ENCODE measurements at regions of chr17 and their contacts with region 1.

Region 1: DNA sequence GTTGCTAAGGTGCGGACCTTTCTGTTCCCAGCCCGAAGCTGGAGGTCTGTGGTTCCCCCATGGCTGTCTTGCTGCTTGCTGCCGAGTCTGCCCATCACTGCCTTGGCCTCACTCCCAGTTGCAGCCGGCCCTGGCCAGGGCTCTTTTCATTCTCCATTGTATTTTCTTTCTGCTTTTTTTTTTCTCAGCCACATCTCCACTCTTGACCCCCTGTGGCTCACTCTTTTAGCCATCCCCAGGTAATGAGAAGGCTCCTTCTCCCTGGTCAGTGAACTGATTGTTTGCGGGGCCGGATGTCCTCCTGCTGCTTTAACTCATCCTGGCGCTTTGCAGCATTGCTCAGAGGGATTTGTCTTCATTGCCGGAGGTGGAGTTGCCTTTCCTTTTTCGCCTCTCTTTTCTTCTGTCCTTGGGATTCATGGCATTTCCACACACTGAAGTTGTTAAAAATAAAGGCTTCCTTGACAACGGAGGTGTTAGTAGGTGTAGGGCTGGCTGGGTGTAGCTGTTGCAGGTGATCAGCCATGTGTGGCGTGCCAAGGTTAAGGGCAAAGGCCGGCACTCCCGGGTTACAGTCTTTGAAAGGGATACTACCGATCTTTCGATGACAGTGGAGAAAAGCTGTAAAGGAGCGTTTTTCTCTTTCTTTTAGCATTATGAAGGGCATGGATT is 34.1 kb downstream of the MAP2K6 start:
- DNase-seq: peak in 1 of 2 donors; percentile 62
- ATAC-seq: peak; percentile 27 to 50
- H3K4me3 ChIP-seq: peak overlapping the region; percentile 19 to 44 (median 38)
- H3K27ac ChIP-seq: peak overlapping the region; percentile 72 to 84 (median 79)
- H3K4me1 ChIP-seq: peaks cover 52 to 58% of the 10 kb centered on the region in 2 donors
- H3K27me3 ChIP-seq: no peaks in the 10 kb centered on the region
- CTCF ChIP-seq: no peak
- POLR2A ChIP-seq: peak in 1 of 2 donors; percentile 11

Region 2: DNA sequence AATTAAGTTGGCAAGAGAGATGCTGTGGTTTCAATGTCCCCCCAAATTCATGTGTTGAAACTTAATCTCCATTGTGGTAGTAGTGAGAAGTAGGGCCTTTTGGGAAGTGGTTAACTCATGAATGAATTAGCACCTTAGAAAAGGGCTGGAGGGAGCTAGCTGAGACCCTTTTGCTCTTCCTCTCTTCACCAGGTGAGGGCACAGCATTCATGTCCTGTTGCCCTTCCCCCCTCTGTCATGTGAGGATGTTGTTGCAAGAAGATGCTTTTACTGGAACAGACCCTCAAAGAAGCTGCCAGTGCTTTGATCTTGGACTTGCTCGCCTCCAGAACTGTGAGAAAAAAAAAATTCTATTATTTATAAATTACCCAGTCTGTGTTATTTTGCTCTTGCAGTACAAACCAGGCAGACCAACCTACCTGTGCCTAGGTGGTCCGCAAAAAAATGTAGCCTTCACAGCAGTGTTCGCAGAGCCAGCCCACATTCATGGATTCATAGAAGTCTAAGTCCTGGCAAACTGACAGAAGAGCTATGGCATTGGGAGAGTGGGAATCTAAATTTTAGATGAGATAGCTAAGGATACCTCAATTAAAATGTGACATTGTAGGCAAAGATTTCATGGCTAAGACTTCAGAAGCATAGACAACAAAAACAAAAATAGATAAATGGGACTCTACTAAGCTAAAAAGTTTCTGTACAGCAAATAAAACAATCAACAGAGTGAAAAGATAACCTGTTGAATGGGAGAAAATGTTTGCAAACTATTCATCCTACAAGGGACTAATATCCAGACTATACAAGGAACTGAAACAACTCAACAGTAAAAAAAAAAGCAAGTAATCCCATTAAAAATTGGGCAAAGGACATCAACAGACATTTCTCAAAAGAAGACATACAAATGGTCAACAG is 89.6 kb before region 1 on chr17:
- in situ Hi-C with region 1: no loop called
- intact Hi-C with region 1: no loop called
- DNase-seq: no peak
- ATAC-seq: no peak
- H3K4me3 ChIP-seq: no peak overlapping the region
- H3K27ac ChIP-seq: no peak overlapping the region
- H3K4me1 ChIP-seq: peaks cover 10 to 12% of the 10 kb centered on the region in 2 donors
- H3K27me3 ChIP-seq: no peaks in the 10 kb centered on the region
- CTCF ChIP-seq: no peak
- POLR2A ChIP-seq: no peak

Region 3: DNA sequence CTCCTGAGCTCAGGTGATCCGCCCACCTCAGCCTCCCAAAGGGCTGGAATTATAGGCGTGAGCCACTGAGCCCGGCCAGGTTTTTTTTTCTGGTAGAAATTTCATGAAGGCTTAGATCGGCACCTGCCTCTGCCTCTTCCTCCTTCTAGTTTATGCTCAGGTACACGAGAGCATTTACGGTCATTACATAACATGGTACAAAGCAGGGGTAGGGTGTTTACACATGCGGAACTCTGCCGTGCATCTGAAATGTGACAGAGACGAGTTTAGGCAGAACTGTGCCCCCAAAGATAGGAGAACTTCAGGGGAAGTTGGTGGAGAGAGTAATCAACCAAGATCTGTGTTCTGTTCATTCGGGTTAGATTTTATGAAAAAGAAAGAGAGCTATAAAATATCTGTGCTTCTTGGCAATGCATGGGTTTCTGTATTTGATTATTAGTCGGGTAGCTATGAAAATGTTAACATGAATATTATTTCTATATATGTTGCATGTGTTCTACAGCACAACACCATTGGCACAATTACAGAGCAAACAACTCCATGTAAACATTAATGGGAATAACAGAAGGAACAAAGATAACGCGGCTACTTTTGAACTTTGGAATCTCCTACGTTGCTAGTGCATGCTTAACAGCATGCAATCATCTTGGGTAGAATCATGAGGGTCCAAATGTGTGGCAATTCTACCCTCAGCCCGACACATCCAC is 57.6 kb before region 1 on chr17:
- in situ Hi-C with region 1: no loop called
- intact Hi-C with region 1: no loop called
- DNase-seq: no peak
- ATAC-seq: no peak
- H3K4me3 ChIP-seq: no peak overlapping the region
- H3K27ac ChIP-seq: no peak overlapping the region
- H3K4me1 ChIP-seq: no peaks in the 10 kb centered on the region
- H3K27me3 ChIP-seq: no peaks in the 10 kb centered on the region
- CTCF ChIP-seq: no peak
- POLR2A ChIP-seq: no peak

Region 4: DNA sequence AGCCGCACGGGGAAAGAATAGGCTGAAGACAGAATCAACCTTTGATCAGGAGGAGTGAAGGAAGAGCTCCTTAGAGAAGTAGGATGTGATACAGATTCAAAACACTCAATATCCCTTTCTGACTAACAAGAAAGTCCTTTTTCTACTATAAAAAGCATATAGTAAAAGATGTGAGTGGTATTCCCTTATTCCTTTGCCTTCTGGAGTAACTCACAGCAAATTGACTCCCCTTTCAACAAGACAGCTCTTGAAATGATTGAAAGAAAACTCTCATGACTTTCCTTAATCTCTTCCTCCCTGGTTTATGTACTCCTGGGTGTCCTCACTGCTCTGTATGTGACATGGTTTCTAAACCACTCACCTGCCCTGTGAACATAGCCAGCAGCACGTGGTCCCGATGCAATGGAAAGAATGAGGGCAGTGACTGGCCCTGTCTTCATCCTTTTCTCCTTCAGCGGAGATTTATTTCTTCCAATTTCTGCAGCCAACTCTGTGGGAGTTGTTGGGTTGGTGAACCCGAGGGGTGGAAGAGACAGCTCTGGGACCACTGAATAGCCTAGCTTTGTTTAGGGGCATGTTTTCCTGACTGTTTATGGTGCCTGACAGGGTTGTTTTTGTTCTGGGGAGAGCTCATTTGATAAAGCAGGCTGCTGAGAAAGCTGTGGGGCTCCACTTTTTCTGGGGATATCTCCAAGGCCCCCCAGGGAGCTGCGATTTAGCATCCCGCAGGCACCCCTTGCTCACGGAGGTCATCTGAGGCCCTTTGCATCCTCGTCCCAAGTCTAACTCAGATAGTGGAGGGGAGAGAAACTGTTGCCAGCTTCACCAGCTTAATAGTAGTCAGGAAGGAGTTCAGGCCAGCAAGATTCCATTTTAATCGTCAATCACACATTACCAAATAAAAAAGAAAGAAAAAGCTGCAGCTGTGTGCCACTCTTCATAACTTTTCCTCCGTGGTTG is 12.7 kb after region 1 on chr17:
- in situ Hi-C with region 1: no loop called
- intact Hi-C with region 1: loop called (anchors 1 kb)
- DNase-seq: peak; percentile 77 to 85
- ATAC-seq: peak; percentile 72 to 74
- H3K4me3 ChIP-seq: peak overlapping the region; percentile 27 to 46 (median 40)
- H3K27ac ChIP-seq: peak overlapping the region; percentile 89 to 97 (median 94)
- H3K4me1 ChIP-seq: peaks cover 29 to 35% of the 10 kb centered on the region in 2 donors
- H3K27me3 ChIP-seq: no peaks in the 10 kb centered on the region
- CTCF ChIP-seq: no peak
- POLR2A ChIP-seq: peak; percentile 73 to 78

Region 5: DNA sequence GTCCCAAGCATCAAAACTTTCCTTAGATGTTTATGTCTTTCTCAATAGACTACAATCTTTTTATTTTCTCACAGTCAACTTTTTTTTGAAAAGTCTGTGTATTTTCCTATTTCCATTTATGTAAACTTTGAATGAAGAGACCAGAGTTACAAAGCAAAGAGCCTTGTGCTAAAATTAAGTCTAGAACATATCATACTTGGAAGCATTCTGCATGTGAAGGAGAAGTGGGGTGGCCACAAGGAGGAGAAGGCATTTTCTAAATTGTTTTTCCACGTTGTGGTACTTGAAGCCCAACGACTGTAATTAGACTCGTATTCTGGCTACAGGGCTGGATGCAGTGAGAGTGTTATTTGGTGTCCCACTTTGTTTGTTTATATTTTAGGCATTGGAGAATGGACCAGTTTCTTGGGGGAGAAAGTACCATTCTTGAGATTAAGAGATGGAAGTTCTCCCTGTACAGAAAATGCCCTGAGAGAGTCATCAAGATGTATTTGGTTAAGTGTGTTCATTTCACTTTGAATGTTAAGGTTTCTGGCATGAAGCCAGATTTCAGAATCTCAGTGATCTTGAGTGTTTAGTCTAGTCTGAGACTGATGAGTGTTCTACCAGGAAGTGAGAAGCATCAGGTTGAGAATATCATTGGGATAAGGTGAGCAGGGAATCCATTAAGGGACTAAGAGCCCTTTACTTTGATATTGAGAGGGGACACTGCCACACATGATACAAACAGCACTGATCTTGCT is 37.5 kb after region 1 on chr17:
- in situ Hi-C with region 1: no loop called
- intact Hi-C with region 1: loop called (anchors 5 kb)
- DNase-seq: no peak
- ATAC-seq: peak; percentile 12 to 20
- H3K4me3 ChIP-seq: peak overlapping the region in 3 of 4 donors; percentile 20 to 62 (median 50)
- H3K27ac ChIP-seq: peak overlapping the region; percentile 85 to 96 (median 95)
- H3K4me1 ChIP-seq: peaks cover 34 to 64% of the 10 kb centered on the region in 2 donors
- H3K27me3 ChIP-seq: no peaks in the 10 kb centered on the region
- CTCF ChIP-seq: peak in 1 of 5 experiments; percentile 21
- POLR2A ChIP-seq: no peak

Region 6: GRCh38 chr17:69501591-69502468 is 53.3 kb after region 1 on chr17:
- in situ Hi-C with region 1: no loop called
- intact Hi-C with region 1: loop called (anchors 5 kb)
- DNase-seq: peak; percentile 34 to 70
- ATAC-seq: peak; percentile 51 to 58
- H3K4me3 ChIP-seq: peak overlapping the region; percentile 35 to 53 (median 52)
- H3K27ac ChIP-seq: peak overlapping the region; percentile 81 to 93 (median 88)
- H3K4me1 ChIP-seq: peaks cover 63 to 64% of the 10 kb centered on the region in 2 donors
- H3K27me3 ChIP-seq: no peaks in the 10 kb centered on the region
- CTCF ChIP-seq: no peak
- POLR2A ChIP-seq: peak; percentile 38 to 71

Measured in gastrocnemius medialis (tissue), 4 donors.